HepG2 (cell line): ENCODE measurements at regions of chr15 and their contacts with region 1.

Region 1: DNA sequence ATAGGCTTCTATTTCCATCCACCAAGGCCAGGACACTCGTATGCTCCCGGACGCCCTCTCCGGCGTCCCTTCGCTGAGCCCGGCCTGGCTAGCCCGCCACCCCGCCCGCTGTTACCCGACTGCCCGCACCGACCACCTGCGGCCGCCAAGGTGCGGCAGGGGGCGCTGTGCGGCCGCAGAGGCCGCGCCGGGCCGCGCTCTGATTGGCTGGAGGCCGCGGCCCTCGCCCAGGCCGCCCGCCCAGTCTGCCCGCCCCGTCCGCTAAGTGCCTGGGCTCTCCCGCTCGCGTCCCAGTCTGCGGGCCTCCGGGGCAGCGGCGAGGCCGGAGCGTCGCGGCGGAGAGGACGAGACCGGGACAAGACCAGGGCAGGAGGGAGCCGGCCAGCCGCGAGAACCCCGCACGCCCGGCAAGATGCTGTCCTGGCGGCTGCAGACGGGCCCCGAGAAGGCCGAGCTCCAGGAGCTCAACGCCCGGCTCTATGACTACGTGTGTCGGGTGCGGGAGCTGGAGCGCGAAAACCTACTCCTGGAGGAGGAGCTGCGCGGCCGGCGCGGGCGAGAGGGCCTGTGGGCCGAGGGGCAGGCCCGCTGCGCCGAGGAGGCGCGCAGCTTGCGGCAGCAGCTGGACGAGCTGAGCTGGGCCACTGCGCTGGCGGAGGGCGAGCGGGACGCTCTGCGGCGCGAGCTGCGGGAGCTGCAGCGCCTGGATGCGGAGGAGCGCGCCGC is at the start of gene SYNM:
- DNase-seq: peak; percentile 72
- ATAC-seq: peak; percentile 95
- H3K4me3 ChIP-seq: peak within 1 kb of the TSS; percentile 42 to 79 (median 66); a peak in 5 of 6 replicates
- H3K27ac ChIP-seq: peak within 1 kb of the TSS; percentile 59
- H3K4me1 ChIP-seq: peaks cover 28% of the 10 kb centered on the region
- H3K27me3 ChIP-seq: peaks cover 1 to 18% of the 10 kb centered on the region in 2 experiments; a peak in 3 of 5 replicates
- CTCF ChIP-seq: peak; percentile 86
- EP300 ChIP-seq: no peak
- POLR2A ChIP-seq: peak; percentile 70 to 87
- RAD21 ChIP-seq: peak; percentile 98
- total RNA-seq, gene SYNM: 3.7 and 6.0 TPM in 2 replicates

Region 2: DNA sequence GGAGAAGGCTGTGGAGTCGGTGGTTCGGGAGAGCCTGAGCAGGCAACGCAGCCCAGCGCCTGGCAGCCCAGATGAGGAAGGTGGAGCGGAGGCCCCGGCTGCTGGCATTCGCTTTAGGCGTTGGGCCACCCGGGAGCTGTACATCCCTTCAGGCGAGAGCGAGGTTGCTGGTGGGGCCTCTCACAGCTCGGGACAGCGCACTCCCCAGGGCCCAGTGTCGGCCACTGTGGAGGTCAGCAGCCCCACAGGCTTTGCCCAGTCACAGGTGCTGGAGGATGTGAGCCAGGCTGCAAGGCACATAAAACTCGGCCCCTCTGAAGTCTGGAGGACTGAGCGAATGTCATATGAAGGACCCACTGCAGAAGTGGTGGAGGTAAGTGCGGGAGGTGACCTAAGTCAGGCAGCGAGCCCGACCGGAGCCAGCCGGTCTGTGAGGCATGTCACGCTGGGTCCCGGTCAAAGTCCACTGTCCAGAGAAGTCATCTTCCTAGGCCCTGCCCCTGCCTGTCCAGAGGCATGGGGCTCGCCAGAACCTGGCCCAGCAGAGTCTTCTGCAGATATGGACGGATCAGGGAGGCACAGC is 26.6 kb after region 1 on chr15:
- CTCF ChIA-PET with region 1: no interaction called
- POLR2A ChIA-PET with region 1: interaction called, 5 read pairs
- in situ Hi-C with region 1: no loop called
- intact Hi-C with region 1: loop called (anchors 2 kb)
- DNase-seq: peak; percentile 83
- ATAC-seq: peak; percentile 99
- H3K4me3 ChIP-seq: peak overlapping the region in 1 of 3 experiments; percentile 29; a peak in 1 of 6 replicates
- H3K27ac ChIP-seq: peak overlapping the region; percentile 47
- H3K4me1 ChIP-seq: peaks cover 47% of the 10 kb centered on the region
- H3K27me3 ChIP-seq: no peaks in the 10 kb centered on the region
- CTCF ChIP-seq: no peak
- EP300 ChIP-seq: no peak
- POLR2A ChIP-seq: 0 out of 4 replicates have a peak, but pooled peaks of 1 of the 2 experiments have one; percentile 43
- RAD21 ChIP-seq: no peak